Endothelial cell of umbilical vein (primary cell): ENCODE measurements at regions of chr2 and their contacts with region 1.

Region 1: DNA sequence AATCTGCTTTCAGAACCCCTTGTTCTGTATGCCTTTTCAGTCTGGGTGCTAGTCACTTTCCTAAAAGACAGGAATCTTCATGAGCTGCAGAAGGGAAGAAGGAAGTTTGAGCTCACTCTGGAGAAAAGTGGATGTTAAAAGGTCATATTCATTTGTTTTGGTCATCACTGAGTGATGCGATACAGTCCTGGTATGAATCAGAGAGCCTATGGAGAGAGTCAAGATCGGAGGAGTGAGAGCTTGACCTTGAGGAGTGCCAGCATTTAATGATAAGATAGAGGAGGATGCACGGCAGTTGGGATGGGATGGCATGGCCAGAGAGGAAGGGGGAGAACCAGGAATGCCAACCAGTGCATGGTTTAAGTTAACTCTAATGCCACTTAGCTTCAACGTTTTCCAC is 19.6 kb downstream of the USP39 start:
- DNase-seq: no peak
- H3K4me3 ChIP-seq: no peak overlapping the region
- H3K27ac ChIP-seq: no peak overlapping the region
- H3K4me1 ChIP-seq: no peaks in the 10 kb centered on the region
- H3K27me3 ChIP-seq: no peaks in the 10 kb centered on the region
- CTCF ChIP-seq: no peak
- POLR2A ChIP-seq: no peak

Region 2: GRCh38 chr2:85162746-85163301 is 472.8 kb before region 1 on chr2:
- CTCF ChIA-PET with region 1: no interaction called
- POLR2A ChIA-PET with region 1: no interaction called
- dilution Hi-C with region 1: no loop called
- intact Hi-C with region 1: no loop called
- DNase-seq: no peak
- H3K4me3 ChIP-seq: no peak overlapping the region
- H3K27ac ChIP-seq: no peak overlapping the region
- H3K4me1 ChIP-seq: no peaks in the 10 kb centered on the region
- H3K27me3 ChIP-seq: no peaks in the 10 kb centered on the region
- CTCF ChIP-seq: no peak
- POLR2A ChIP-seq: no peak

Region 3: DNA sequence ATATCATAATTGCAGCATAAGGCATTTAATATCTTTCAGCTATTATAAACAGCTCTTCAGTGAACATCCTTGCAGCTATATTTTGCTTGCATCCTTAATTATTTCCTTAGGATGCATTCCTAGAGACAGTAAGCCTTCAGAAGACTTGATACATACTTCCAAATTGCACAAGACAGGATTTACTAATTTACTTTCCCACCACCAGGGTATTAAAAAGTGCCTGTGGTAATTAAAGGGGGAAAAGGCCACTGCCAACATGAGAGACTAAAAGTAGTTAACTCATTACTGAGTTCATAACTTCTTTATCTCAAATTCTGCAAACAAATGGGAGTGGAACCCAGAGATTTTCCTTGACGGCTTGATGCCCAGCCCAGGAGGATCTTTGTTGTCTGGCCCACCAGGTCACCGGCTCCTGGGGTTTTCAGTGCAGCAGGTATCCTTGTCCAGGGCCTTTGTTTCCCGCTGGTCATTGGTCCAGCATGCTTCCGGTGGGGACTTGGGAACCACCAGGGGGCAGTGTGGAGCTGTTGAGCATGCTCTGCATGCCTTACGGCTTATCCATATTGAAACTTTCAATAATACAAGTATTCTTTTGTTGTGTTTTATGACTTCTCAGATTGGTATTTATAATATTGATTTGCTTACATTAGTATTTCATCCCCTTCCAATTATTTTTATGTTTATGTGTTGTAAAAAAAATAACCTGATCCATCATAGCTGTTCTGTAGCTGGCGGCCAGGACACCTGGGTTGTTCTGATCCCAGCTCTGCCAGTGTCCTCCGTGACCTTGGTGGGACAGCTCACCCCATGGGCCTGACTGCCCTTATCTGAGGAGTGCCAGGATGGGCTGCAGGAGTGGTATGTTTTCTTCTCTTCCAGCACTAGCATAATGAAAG is 369.2 kb before region 1 on chr2:
- CTCF ChIA-PET with region 1: no interaction called
- POLR2A ChIA-PET with region 1: no interaction called
- dilution Hi-C with region 1: no loop called
- intact Hi-C with region 1: no loop called
- DNase-seq: peak; percentile 25
- H3K4me3 ChIP-seq: no peak overlapping the region
- H3K27ac ChIP-seq: no peak overlapping the region
- H3K4me1 ChIP-seq: peaks cover 39% of the 10 kb centered on the region
- H3K27me3 ChIP-seq: no peaks in the 10 kb centered on the region
- CTCF ChIP-seq: peak; percentile 74 to 89
- POLR2A ChIP-seq: no peak

Region 4: DNA sequence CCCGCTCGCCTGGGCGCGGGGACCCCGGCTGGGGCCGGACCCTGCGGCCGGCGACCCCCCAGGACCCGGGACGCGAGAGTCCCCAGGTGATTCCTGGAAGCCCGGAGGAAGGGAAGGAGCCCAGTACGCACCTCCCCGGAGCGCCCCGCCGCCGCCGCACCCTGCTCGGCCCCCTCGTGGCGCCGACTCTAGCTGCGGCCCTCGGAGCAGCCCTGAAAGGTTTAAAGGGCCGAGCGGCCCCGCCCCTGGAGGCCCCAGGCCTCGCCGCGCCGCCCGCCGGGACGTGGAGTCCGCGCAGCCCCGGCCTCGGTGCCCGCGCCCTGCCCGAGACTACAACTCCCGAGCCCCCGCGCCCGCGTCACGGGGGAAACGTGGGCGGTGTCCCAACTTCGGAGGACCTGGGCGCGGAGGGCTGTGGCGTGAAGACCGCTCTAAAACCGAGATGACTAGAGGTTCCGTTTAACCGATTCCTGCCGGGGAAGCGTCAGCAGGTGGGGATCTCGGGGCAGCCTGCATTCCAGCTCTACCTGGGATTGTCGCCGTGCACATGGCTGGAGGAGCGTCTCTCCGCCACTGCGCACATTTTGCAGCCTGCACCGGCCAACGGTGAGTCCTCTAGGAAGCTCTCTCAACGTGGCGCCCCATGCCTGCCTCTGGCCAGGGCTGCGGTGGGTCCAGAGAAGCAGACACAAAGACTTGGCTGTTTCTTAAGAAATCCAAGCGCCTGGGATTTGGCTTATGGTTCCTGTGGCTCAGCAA is 33.0 kb before region 1 on chr2 and contains the start of gene TMEM150A:
- CTCF ChIA-PET with region 1: interaction called, 17 read pairs
- POLR2A ChIA-PET with region 1: no interaction called
- dilution Hi-C with region 1: no loop called
- intact Hi-C with region 1: no loop called
- DNase-seq: peak; percentile 88
- H3K4me3 ChIP-seq: peak within 1 kb of the TSS; percentile 64 to 98 (median 65)
- H3K27ac ChIP-seq: peak within 1 kb of the TSS; percentile 23
- H3K4me1 ChIP-seq: peaks cover 24% of the 10 kb centered on the region
- H3K27me3 ChIP-seq: no peaks in the 10 kb centered on the region
- CTCF ChIP-seq: peak; percentile 32 to 51
- POLR2A ChIP-seq: peak; percentile 87
- total RNA-seq, gene TMEM150A: 14.6 and 17.7 TPM in 2 replicates

Region 5: GRCh38 chr2:85619617-85620016 is 16.0 kb before region 1 on chr2:
- CTCF ChIA-PET with region 1: interaction called, 74 read pairs
- POLR2A ChIA-PET with region 1: interaction called, 3 read pairs
- dilution Hi-C with region 1: no loop called
- intact Hi-C with region 1: no loop called
- DNase-seq: no peak
- H3K4me3 ChIP-seq: no peak overlapping the region
- H3K27ac ChIP-seq: no peak overlapping the region
- H3K4me1 ChIP-seq: peaks cover 9% of the 10 kb centered on the region
- H3K27me3 ChIP-seq: no peaks in the 10 kb centered on the region
- CTCF ChIP-seq: no peak
- POLR2A ChIP-seq: no peak